Esophagus squamous epithelium (tissue), 5 donors: ENCODE measurements at regions of chr3 and their contacts with region 1.

Region 1: DNA sequence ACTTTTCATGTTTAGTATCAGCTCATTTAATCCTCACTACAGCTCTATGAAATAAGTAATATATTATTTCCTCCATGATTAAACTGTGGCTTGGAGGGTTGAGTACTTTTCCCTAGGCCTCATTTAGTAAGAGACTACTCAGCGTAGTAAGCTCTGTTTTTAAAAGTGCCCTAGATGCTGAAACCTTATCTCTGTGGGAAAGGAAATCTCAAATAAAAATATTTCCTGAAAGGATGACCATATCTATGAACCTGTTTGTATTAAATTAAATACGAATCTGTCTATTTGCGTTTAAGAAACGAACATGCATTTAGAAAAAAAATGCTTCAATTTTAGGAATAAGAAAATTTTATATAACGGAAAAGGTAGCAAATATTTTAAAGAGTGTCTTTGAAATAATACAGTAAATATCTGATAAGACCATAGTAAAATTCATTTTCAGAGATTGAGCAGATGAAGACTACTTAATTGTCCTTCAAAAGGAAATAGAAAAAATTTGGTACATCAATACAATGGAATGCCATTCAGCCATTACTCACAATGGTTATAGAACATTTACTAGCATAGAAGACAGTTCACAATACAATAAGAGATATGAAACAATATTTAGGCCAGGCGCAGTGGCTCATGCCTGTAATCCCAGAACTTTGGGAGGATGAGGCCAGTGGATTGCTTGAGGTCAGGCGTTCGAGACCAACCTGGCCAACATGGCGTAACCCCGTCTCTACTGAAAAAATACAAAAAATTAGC is 56.2 kb downstream of the ATG7 start:
- DNase-seq: no peak
- H3K4me3 ChIP-seq: no peak overlapping the region
- H3K27ac ChIP-seq: no peak overlapping the region
- H3K4me1 ChIP-seq: peaks cover 0 to 14% (median 0%) of the 10 kb centered on the region in 3 donors
- H3K27me3 ChIP-seq: no peaks in the 10 kb centered on the region
- CTCF ChIP-seq: no peak
- POLR2A ChIP-seq: no peak

Region 2: GRCh38 chr3:11236595-11237461 is 91.5 kb before region 1 on chr3:
- intact Hi-C with region 1: loop called (anchors 5 kb)
- DNase-seq: no peak
- H3K4me3 ChIP-seq: no peak overlapping the region
- H3K27ac ChIP-seq: peak overlapping the region in 1 of 4 donors; percentile 2
- H3K4me1 ChIP-seq: peaks cover 0 to 17% (median 0%) of the 10 kb centered on the region in 3 donors
- H3K27me3 ChIP-seq: peaks cover 0 to 7% (median 0%) of the 10 kb centered on the region in 4 donors
- CTCF ChIP-seq: peak; percentile 69 to 81 (median 73)
- POLR2A ChIP-seq: no peak

Region 3: DNA sequence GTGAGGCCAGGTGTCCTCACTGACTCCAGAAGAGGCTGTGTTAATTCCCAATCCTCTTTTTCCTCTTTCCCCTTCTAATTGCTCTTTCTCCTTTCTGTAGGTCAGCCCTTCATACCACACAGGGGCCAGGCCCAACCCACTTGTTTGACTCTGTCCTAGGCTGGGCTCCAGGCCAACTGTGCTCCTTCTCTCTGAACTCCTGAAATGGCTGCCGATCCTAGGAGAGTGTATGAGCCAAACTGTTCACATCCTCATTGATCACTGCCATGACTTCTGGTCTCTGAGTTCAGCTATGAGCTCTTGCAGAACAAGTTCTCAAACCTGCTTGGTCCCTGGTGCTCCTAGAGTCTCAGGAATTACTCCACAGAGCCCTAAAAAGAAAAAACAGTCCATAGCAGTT is 170.3 kb after region 1 on chr3:
- intact Hi-C with region 1: no loop called
- DNase-seq: no peak
- H3K4me3 ChIP-seq: no peak overlapping the region
- H3K27ac ChIP-seq: peak overlapping the region; percentile 39 to 72 (median 52)
- H3K4me1 ChIP-seq: peaks cover 0 to 20% (median 12%) of the 10 kb centered on the region in 3 donors
- H3K27me3 ChIP-seq: no peaks in the 10 kb centered on the region
- CTCF ChIP-seq: no peak
- POLR2A ChIP-seq: no peak